Astrocyte of the cerebellum (primary cell): ENCODE measurements at regions of chr3 and their contacts with region 1.

Region 1: DNA sequence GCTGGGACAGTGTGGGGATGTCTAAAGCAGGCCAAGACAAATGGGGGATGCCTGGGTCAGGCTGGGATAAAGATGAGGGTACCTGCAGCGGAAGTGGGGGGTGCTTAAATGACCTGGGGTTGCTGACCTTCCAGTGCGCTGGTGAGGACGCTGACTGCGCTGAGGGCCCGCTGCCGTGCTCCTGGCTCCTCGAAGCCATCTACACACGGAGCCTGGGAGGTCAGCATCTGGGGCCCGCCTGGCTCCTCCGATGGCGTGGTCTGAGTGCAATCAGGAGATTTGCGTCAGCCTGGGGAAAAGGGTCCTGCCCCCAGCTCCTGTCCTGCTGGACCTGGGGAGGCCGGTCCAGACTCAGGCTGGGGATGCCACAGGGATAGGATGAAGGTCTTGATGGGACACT is 50.7 kb downstream of the SCN5A start:
- DNase-seq: no peak
- H3K4me3 ChIP-seq: no peak overlapping the region
- CTCF ChIP-seq: no peak

Region 2: GRCh38 chr3:38205472-38205805 is 393.4 kb before region 1 on chr3:
- in situ Hi-C with region 1: no loop called
- DNase-seq: no peak
- H3K4me3 ChIP-seq: no peak overlapping the region
- CTCF ChIP-seq: no peak

Region 3: GRCh38 chr3:38556640-38557358 is 42.0 kb before region 1 on chr3:
- in situ Hi-C with region 1: loop called (anchors 5 kb)
- DNase-seq: no peak
- H3K4me3 ChIP-seq: no peak overlapping the region
- CTCF ChIP-seq: no peak